ENCODE measurements at regions of chr2 and their contacts with region 1.

Region 1: GRCh38 chr2:113203901-113204519 is 30.2 kb downstream of the PSD4 start:
- DNase-seq: peak; percentile 84
- ATAC-seq: peak; percentile 80
- H3K4me3 Mint-ChIP-seq: no peak overlapping the region
- H3K27ac Mint-ChIP-seq: peak overlapping the region; percentile 25
- H3K4me1 Mint-ChIP-seq: peaks cover 18% of the 10 kb centered on the region
- H3K27me3 Mint-ChIP-seq: no peaks in the 10 kb centered on the region

Region 2: GRCh38 chr2:112529757-112530156 is 674.3 kb before region 1 on chr2:
- CTCF ChIA-PET with region 1: no interaction called
- DNase-seq: no peak
- ATAC-seq: no peak
- H3K4me3 Mint-ChIP-seq: no peak overlapping the region
- H3K27ac Mint-ChIP-seq: no peak overlapping the region
- H3K4me1 Mint-ChIP-seq: no peaks in the 10 kb centered on the region
- H3K27me3 Mint-ChIP-seq: no peaks in the 10 kb centered on the region

Region 3: GRCh38 chr2:113080134-113080533 is 123.9 kb before region 1 on chr2:
- CTCF ChIA-PET with region 1: interaction called, 31 read pairs
- DNase-seq: peak; percentile 68
- ATAC-seq: peak; percentile 74
- H3K4me3 Mint-ChIP-seq: no peak overlapping the region
- H3K27ac Mint-ChIP-seq: no peak overlapping the region
- H3K4me1 Mint-ChIP-seq: peaks cover 13% of the 10 kb centered on the region
- H3K27me3 Mint-ChIP-seq: peaks cover 5% of the 10 kb centered on the region

Region 4: GRCh38 chr2:113192438-113193100 is 11.4 kb before region 1 on chr2:
- CTCF ChIA-PET with region 1: interaction called, 14 read pairs
- DNase-seq: no peak
- ATAC-seq: no peak
- H3K4me3 Mint-ChIP-seq: no peak overlapping the region
- H3K27ac Mint-ChIP-seq: peak overlapping the region; percentile 54
- H3K4me1 Mint-ChIP-seq: peaks cover 73% of the 10 kb centered on the region
- H3K27me3 Mint-ChIP-seq: no peaks in the 10 kb centered on the region

Region 5: DNA sequence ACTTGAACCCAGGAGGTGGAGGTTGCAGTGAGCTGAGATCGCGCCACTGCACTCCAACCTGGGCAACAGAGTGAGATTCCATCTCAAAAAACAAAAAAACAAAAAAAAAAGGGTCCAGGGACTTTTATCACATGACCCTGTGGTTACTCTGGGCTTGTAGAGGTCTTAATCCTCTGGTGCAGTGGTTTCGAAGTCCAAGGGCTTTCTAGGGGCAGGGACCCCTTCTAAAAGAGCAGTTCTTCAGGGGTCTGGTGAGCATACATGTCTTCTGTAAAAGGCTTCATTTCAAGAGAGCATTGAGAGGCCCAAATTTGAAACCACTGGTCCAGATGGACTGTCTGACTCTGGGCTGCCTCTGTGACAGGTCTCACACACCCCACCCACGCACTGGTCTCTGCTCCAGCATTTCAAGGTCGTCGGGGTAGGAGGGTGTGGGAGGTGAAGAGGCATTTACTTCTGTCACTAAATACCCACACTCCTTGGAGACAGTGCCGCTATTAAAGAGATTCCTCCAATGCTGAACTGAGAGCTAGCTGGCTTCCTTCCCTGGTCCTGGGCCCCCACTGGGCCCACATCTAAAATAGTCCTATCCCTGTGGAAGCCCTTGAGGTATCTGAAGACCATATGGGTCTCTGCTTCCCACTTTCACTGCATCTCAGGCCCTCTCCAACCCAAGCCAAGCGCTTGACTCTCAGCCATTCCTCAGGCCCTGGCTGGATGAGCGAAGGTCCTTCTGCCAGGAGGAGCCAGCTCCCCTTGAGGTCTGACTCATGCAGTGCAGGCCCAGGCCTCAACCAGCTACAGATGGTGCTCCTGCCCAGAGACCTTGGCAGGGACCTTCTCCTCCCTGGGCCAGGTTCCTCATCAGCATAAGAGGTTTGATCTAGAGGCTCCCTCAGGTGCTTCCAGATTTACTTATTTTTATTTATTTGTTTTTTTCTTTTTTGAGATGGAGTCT is 29.9 kb after region 1 on chr2:
- CTCF ChIA-PET with region 1: interaction called, 10 read pairs
- DNase-seq: no peak
- ATAC-seq: no peak
- H3K4me3 Mint-ChIP-seq: no peak overlapping the region
- H3K27ac Mint-ChIP-seq: no peak overlapping the region
- H3K4me1 Mint-ChIP-seq: peaks cover 46% of the 10 kb centered on the region
- H3K27me3 Mint-ChIP-seq: peaks cover 2% of the 10 kb centered on the region

Region 6: DNA sequence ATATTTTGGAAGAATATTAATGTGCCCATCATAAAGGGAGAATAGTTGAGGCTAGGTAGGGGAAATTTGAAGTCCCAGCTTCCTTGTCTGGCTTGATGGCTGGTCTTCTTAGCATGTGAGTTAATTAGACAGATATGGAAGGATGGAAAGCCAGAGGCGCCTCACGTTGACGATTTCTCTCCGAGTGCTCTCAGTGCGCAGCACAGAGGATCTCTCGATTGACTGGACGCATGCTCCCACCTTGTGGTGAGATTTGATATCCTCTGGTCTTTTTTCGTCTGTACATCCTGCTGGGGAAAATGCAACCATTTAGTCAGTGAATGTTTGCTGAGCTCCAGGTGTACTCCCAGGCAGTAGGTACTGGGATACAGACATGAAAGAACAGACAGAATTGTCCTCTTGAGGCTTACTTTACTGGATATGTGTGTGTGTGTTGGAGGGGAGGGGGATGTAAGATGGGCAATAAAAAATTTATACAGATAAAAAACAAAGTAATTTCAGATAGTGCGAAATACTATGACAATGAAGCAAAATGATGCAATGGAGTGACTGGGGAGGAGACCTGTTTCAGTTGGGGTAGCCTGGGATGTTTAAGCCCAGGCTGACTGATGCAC is 166.6 kb after region 1 on chr2:
- CTCF ChIA-PET with region 1: interaction called, 28 read pairs
- DNase-seq: peak; percentile 86
- ATAC-seq: peak; percentile 99
- H3K4me3 Mint-ChIP-seq: no peak overlapping the region
- H3K27ac Mint-ChIP-seq: peak overlapping the region; percentile 66
- H3K4me1 Mint-ChIP-seq: peaks cover 21% of the 10 kb centered on the region
- H3K27me3 Mint-ChIP-seq: peaks cover 10% of the 10 kb centered on the region

Measured in activated CD8-positive, alpha-beta memory T cell treated with anti-CD3 and anti-CD28 coated beads, Interleukin-2, amount 10 ng/mL, durations not matched to agents 7 days and 5 days (primary cell).